Activated CD4-positive, alpha-beta memory T cell treated with anti-CD3 and anti-CD28 coated beads for 36 hours (primary cell): ENCODE measurements at regions of chr1 and their contacts with region 1.

Region 1: DNA sequence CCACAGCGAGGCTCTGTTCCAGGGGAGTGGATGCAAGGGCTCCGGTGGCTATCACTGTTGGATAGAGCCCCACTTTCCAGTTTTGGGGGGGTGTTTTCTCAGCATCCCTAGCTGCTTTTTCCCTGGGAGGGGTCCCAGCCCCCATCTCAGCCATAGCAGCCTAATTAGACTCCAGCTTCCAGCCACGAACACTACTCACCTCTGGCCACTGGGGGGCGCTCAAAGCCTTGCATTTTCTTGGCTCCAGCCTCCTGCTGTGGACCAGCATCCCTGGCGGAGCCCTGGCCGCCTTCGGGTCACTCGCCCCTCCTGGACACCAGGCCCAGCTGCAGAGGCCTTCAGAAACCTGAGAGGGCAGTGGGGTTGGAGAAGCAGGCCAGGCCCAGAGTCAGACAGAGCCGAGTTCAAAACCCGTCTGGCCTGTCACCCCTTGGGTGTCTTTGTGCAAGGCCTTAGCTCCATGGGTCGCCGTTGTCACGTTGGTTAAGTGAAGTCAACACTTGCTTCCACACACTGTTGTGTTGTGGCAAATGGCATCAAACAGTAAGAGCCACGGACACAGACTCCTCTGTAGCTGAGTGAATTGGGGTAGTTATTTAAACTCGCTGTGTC is 93.5 kb upstream of the ACTL8 start:
- DNase-seq: peak; percentile 70
- H3K4me3 Mint-ChIP-seq: no peak overlapping the region
- H3K27ac Mint-ChIP-seq: no peak overlapping the region
- H3K4me1 Mint-ChIP-seq: no peaks in the 10 kb centered on the region
- H3K27me3 Mint-ChIP-seq: no peaks in the 10 kb centered on the region

Region 2: GRCh38 chr1:17551755-17552234 is 109.9 kb before region 1 on chr1:
- CTCF ChIA-PET with region 1: no interaction called
- POLR2A ChIA-PET with region 1: no interaction called
- intact Hi-C with region 1: no loop called
- DNase-seq: no peak
- H3K4me3 Mint-ChIP-seq: no peak overlapping the region
- H3K27ac Mint-ChIP-seq: no peak overlapping the region
- H3K4me1 Mint-ChIP-seq: no peaks in the 10 kb centered on the region
- H3K27me3 Mint-ChIP-seq: peaks cover 9% of the 10 kb centered on the region

Region 3: DNA sequence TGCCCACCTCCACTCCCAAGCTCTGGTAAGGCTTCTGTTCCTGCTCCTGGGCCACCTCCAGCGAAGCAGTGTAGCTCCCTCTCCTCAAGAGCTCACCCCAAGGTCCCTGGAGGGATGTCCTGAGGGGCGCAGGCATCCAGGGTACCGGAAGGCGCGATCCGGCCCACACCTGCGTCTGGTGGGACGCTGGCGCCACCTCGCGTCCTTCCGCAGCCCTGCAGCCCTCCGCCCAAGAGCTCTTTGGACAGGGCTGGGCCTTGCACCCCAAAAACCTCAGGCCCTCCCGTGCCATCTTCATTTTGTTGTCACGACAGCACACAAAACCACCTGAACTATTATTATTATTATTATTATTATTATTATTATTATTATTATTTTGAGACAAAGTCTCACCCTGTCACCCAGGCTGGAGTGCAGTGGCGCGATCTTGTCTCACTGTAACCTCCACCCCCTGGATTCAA is 919.8 kb after region 1 on chr1:
- CTCF ChIA-PET with region 1: interaction called, 19 read pairs
- POLR2A ChIA-PET with region 1: no interaction called
- intact Hi-C with region 1: no loop called
- DNase-seq: peak; percentile 58
- H3K4me3 Mint-ChIP-seq: no peak overlapping the region
- H3K27ac Mint-ChIP-seq: no peak overlapping the region
- H3K4me1 Mint-ChIP-seq: no peaks in the 10 kb centered on the region
- H3K27me3 Mint-ChIP-seq: peaks cover 12% of the 10 kb centered on the region